ENCODE measurements at regions of chr4 and their contacts with region 1.

Region 1: GRCh38 chr4:76504613-76505465 is 69.8 kb downstream of the SHROOM3 start:
- DNase-seq: no peak
- H3K4me3 ChIP-seq: no peak overlapping the region
- CTCF ChIP-seq: peak; percentile 44

Region 2: GRCh38 chr4:76266627-76267026 is 238.2 kb before region 1 on chr4:
- CTCF ChIA-PET with region 1: no interaction called
- POLR2A ChIA-PET with region 1: no interaction called
- DNase-seq: no peak
- H3K4me3 ChIP-seq: no peak overlapping the region
- CTCF ChIP-seq: no peak

Region 3: GRCh38 chr4:76485450-76485849 is 19.4 kb before region 1 on chr4:
- CTCF ChIA-PET with region 1: interaction called, 38 read pairs
- POLR2A ChIA-PET with region 1: no interaction called
- DNase-seq: no peak
- H3K4me3 ChIP-seq: no peak overlapping the region
- CTCF ChIP-seq: no peak

Region 4: DNA sequence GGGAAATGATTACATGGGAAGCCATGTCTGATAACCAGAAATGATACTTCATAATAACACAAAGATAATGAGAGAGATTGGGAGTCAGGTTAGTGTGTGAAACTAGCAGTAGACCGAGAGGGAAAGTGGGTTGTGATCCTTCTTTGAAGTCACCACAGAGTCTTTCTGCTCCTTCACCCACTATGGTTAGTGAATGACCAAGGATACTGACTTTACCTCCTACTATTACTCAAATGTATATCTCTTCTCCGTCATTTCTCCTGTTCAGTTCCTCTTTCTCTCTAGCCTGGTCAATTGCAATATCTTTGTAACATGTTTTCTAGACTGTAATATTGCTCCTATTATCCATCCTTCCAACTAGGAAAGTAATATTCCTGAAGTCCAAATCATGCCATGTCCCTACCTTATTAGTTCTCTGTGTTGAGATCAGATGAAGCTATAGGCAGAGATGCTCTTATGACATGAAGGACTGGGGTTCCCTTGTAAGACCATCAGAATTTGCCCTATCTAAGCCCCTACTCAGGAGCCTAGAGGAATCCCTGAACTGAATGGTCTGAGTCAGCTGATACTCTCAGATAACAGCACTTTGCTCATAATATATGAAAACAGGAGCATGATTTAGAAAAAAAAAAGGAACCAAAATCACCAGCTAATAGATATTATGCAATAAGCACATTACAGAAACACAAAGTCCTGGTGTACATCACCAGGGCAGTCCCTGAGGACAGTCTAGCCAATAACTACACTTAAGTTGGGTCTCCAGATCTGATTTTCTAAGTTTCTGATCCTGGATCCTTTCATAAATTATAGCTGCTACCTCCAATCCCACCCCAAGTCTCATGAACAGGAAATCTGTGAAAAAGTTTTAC is 11.4 kb after region 1 on chr4:
- CTCF ChIA-PET with region 1: interaction called, 10 read pairs
- POLR2A ChIA-PET with region 1: no interaction called
- DNase-seq: no peak
- H3K4me3 ChIP-seq: no peak overlapping the region
- CTCF ChIP-seq: no peak

Region 5: DNA sequence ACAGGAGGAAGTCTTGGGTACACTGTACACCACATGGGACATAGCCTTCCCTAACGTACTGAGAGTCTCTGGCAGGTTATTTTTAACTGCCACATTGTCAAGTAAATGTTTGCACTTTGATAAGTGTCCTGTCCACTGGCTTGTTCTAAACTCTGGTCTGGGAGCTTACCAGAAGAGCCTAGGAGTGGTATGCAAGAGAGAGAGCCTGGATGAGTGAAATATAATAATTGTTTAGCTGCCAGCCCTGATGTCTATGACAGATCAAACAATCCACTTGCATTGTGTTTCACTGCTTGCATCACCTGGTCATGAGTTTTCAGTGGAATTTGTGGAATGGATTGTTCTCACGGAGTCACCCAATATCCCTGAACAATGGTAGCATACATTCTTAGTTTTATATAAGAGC is 21.7 kb after region 1 on chr4:
- CTCF ChIA-PET with region 1: interaction called, 11 read pairs
- POLR2A ChIA-PET with region 1: no interaction called
- DNase-seq: no peak
- H3K4me3 ChIP-seq: no peak overlapping the region
- CTCF ChIP-seq: no peak

Measured in AG04449 (cell line).